Activated CD8-positive, alpha-beta T cell treated with anti-CD3 and anti-CD28 coated beads, Interleukin-2, amount 10 ng/mL, durations not matched to agents 7 days and 5 days (primary cell): ENCODE measurements at regions of chr13 and their contacts with region 1.

Region 1: GRCh38 chr13:39034085-39034484 is 3.8 kb downstream of the PROSER1 start:
- DNase-seq: no peak
- ATAC-seq: no peak
- H3K4me3 Mint-ChIP-seq: no peak overlapping the region
- H3K27ac Mint-ChIP-seq: no peak overlapping the region
- H3K4me1 Mint-ChIP-seq: peaks cover 31% of the 10 kb centered on the region
- H3K27me3 Mint-ChIP-seq: no peaks in the 10 kb centered on the region

Region 2: GRCh38 chr13:39016787-39017186 is 17.3 kb before region 1 on chr13:
- CTCF ChIA-PET with region 1: interaction called, 21 read pairs
- POLR2A ChIA-PET with region 1: interaction called, 3 read pairs
- DNase-seq: peak; percentile 39
- ATAC-seq: peak; percentile 69
- H3K4me3 Mint-ChIP-seq: no peak overlapping the region
- H3K27ac Mint-ChIP-seq: no peak overlapping the region
- H3K4me1 Mint-ChIP-seq: peaks cover 15% of the 10 kb centered on the region
- H3K27me3 Mint-ChIP-seq: no peaks in the 10 kb centered on the region

Region 3: GRCh38 chr13:39132286-39133230 is 98.5 kb after region 1 on chr13:
- CTCF ChIA-PET with region 1: no interaction called
- POLR2A ChIA-PET with region 1: no interaction called
- DNase-seq: no peak
- ATAC-seq: no peak
- H3K4me3 Mint-ChIP-seq: no peak overlapping the region
- H3K27ac Mint-ChIP-seq: no peak overlapping the region
- H3K4me1 Mint-ChIP-seq: no peaks in the 10 kb centered on the region
- H3K27me3 Mint-ChIP-seq: peaks cover 6% of the 10 kb centered on the region